Right cardiac atrium (tissue), 5 donors: ENCODE measurements at regions of chr20 and their contacts with region 1.

Region 1: GRCh38 chr20:10558635-10559187 is 115.1 kb downstream of the JAG1 start:
- DNase-seq: no peak
- ATAC-seq: no peak
- H3K4me3 ChIP-seq: no peak overlapping the region
- H3K27ac ChIP-seq: no peak overlapping the region
- H3K4me1 ChIP-seq: no peaks in the 10 kb centered on the region
- H3K27me3 ChIP-seq: no peaks in the 10 kb centered on the region

Region 2: GRCh38 chr20:10708351-10709185 is 149.9 kb after region 1 on chr20:
- intact Hi-C with region 1: no loop called
- DNase-seq: no peak
- ATAC-seq: peak in 1 of 2 donors; percentile 44
- H3K4me3 ChIP-seq: no peak overlapping the region
- H3K27ac ChIP-seq: no peak overlapping the region
- H3K4me1 ChIP-seq: no peaks in the 10 kb centered on the region
- H3K27me3 ChIP-seq: no peaks in the 10 kb centered on the region

Region 3: GRCh38 chr20:11549172-11550103 is 990.7 kb after region 1 on chr20:
- intact Hi-C with region 1: loop called in 3 of 4 experiments (anchors 5 to 10 kb)
- DNase-seq: no peak
- ATAC-seq: no peak
- H3K4me3 ChIP-seq: no peak overlapping the region
- H3K27ac ChIP-seq: no peak overlapping the region
- H3K4me1 ChIP-seq: no peaks in the 10 kb centered on the region
- H3K27me3 ChIP-seq: no peaks in the 10 kb centered on the region